PC-9 (cell line): ENCODE measurements at regions of chr14 and their contacts with region 1.

Region 1: GRCh38 chr14:63276492-63277342 is 42.0 kb downstream of the GPHB5 start:
- DNase-seq: peak; percentile 3 to 47
- H3K4me3 ChIP-seq: no peak overlapping the region
- H3K27ac ChIP-seq: no peak overlapping the region
- H3K4me1 ChIP-seq: no peaks in the 10 kb centered on the region
- H3K27me3 ChIP-seq: no peaks in the 10 kb centered on the region
- CTCF ChIP-seq: peak; percentile 92

Region 2: DNA sequence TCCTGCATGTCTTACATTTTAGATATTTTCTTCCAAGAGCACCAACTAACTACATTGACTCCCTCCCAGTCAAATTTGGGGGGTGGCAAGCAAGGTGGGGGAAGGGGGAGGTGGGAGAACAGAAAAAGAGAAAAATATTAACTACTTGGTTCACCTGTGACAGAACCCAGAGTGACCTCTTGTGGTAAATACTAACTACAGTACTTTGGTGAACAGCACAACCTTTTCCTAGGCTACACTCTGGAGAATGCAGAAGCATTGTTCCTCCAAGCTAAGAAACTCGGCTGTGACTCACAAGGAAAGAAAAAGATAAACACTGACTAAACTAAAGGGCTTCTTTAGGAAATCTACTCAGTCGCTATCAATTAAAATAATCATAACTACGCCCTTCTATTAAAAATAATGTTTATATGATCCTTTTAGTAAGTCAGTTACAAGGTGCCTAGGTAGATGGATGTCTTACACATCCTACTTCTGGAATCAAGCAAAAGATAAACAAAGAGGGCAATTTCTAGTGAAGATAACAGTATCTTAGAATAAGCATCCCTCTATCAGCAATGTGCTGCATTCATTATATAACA is 236.8 kb before region 1 on chr14:
- CTCF ChIA-PET with region 1: no interaction called
- POLR2A ChIA-PET with region 1: no interaction called
- intact Hi-C with region 1: loop called (anchors 1 kb)
- DNase-seq: peak; percentile 27 to 78
- H3K4me3 ChIP-seq: no peak overlapping the region
- H3K27ac ChIP-seq: no peak overlapping the region
- H3K4me1 ChIP-seq: no peaks in the 10 kb centered on the region
- H3K27me3 ChIP-seq: no peaks in the 10 kb centered on the region
- CTCF ChIP-seq: peak; percentile 64

Region 3: GRCh38 chr14:63174760-63175211 is 101.9 kb before region 1 on chr14:
- CTCF ChIA-PET with region 1: interaction called, 4 read pairs
- POLR2A ChIA-PET with region 1: no interaction called
- intact Hi-C with region 1: loop called (anchors 1 kb)
- DNase-seq: peak in 1 of 2 experiments; percentile 38
- H3K4me3 ChIP-seq: no peak overlapping the region
- H3K27ac ChIP-seq: no peak overlapping the region
- H3K4me1 ChIP-seq: no peaks in the 10 kb centered on the region
- H3K27me3 ChIP-seq: no peaks in the 10 kb centered on the region
- CTCF ChIP-seq: peak; percentile 64